ENCODE measurements at regions of chr3 and their contacts with region 1.

Region 1: DNA sequence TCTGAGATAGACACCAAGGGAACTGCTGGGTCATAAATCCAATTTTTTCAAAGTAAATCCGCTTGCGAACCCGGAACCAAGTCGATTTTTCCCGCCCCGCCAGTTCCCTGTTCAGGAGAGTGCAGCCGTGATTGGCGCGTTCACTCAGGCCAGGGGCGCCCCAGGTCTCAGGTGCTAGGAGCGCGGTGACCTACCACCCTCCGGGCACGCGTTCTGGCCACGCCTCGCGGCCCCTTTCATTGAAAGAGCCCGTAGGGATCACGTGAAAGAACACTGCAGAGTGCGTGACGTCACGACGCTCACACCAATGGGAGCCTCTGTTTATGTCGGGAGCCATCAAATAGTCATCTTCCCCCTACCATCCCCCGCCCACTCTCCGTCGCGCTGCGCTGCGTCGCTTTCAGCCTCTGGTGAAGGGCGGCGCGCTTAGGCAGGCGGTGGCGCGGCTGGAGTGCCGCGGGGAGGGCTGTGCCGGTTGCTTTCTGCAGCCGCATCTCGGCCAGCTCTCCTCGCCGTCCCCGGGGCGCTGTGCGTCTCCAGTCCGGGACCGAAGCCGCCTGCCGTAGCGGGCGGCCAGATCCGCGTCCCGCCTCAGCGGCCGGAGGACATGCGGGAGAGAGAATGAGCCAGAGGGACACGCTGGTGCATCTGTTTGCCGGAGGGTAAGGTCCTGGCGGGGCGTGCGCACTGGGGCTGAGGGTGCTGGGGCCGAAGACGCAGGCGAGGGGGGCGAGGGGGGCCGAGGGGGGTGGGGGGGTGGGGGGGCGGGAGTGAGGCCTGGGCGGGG is at the start of gene SLC25A36:
- DNase-seq: peak; percentile 92 to 98
- H3K4me3 ChIP-seq: peak within 1 kb of the TSS; percentile 73 to 99
- H3K27ac ChIP-seq: peak within 1 kb of the TSS; percentile 99
- H3K4me1 ChIP-seq: peaks cover 0 to 15% of the 10 kb centered on the region in 2 donors
- H3K27me3 ChIP-seq: no peaks in the 10 kb centered on the region
- CTCF ChIP-seq: peak in 1 of 3 experiments; percentile 4
- total RNA-seq, gene SLC25A36: 19.1 TPM

Region 2: DNA sequence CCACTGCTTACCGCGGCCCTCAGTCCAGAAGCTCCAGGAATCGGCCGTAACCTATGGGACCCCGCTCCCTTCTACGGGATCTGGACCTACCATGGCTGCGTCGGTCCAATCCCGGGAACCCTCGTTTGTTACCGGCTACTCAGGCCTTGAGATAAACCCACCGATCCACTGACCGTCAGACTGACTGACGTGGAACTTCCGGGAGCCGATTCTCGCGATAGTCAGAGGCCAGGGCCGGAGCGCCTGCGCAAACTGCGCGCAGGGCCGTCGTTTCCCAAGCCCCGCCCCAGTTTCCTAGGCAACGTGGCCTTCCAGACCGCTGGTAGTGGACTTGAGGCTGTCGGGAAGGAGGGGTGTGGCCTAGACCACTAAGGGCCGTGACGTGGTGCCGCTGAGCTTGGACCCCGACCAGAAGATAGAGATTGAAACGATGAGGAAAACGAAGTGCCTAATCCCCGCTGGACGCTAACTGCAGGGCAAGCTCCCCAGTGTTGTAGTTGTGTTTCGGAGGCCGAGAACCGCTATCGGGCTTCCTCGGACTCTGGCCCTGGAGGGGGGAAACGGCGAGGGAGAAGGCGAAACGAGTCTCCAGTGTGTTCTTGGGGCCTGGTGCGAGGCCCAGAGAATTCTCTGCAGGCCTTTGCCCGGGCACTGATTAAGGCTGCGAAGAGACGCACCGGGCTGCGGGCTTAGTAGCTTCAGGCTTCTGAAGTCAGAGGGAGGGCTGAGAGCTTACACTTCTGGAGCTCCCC is 1552.0 kb before region 1 on chr3 and contains the start of gene COPB2:
- intact Hi-C with region 1: loop called (anchors 5 kb)
- DNase-seq: peak; percentile 97 to 100
- H3K4me3 ChIP-seq: peak within 1 kb of the TSS; percentile 98 to 99
- H3K27ac ChIP-seq: peak within 1 kb of the TSS; percentile 96
- H3K4me1 ChIP-seq: peaks cover 3 to 25% of the 10 kb centered on the region in 2 donors
- H3K27me3 ChIP-seq: no peaks in the 10 kb centered on the region
- CTCF ChIP-seq: no peak
- total RNA-seq, gene COPB2: 26.6 TPM

Region 3: GRCh38 chr3:141114816-141115460 is 173.3 kb after region 1 on chr3:
- intact Hi-C with region 1: loop called (anchors 5 kb)
- DNase-seq: no peak
- H3K4me3 ChIP-seq: no peak overlapping the region
- H3K27ac ChIP-seq: no peak overlapping the region
- H3K4me1 ChIP-seq: peaks cover 12 to 21% of the 10 kb centered on the region in 2 donors
- H3K27me3 ChIP-seq: no peaks in the 10 kb centered on the region
- CTCF ChIP-seq: peak in 1 of 3 experiments; percentile 15

Measured in ascending aorta (tissue), 2 donors.